ENCODE measurements at regions of chr3 and their contacts with region 1.

Region 1: GRCh38 chr3:58305882-58306711 is at the starts of genes HTD2 and RPP14:
- DNase-seq: peak; percentile 90 to 99
- H3K4me3 ChIP-seq: peak within 1 kb of the TSS; percentile 77 to 86
- H3K27ac ChIP-seq: peak within 1 kb of the TSS; percentile 96 to 97
- H3K4me1 ChIP-seq: peaks cover 7 to 21% of the 10 kb centered on the region in 2 donors
- H3K27me3 ChIP-seq: no peaks in the 10 kb centered on the region
- CTCF ChIP-seq: peak; percentile 92 to 98 (median 94)
- total RNA-seq, gene HTD2: 0.53 TPM
- total RNA-seq, gene RPP14: 32.5 TPM

Region 2: DNA sequence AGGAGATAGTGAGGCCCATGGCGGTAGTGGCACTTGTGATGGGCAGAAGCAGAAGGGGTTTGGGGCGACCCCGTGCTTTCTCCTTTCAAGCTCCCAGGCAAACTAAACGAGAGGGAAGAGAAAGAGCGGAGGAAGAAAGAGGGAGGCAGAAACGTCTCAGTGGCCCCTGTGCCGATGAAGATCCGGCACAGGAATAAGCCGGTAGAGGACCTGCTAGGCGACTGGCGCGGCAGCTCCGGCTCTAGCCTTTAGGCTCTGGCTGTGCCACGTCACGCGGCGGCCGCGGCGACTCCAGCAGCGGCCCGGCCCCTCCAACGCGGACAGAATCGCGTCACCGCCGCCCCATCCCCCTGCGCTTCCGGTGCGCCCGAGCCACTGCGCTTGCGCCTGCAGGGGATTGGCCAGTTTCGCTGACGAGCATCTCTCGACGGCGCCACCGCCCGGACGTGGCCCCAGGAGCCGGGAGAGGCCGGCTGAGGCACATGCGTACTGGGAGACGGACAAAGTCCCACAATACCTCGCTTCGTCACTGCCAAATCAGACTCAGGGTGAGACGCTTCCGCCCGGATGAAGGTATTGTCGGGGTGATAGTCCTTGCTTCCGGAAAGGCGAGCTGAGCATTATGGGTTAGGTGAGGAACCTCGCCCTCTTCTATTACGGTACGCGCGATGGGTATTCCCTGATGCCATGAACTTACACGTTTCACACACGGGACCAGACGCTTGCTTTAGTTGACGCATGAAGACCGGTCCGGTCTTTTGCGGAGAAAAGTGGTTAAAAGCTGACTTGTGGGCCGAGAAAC is 708.8 kb before region 1 on chr3 and contains the start of gene ARF4:
- intact Hi-C with region 1: loop called (anchors 1 kb)
- DNase-seq: peak; percentile 99 to 100
- H3K4me3 ChIP-seq: peak within 1 kb of the TSS; percentile 80 to 95
- H3K27ac ChIP-seq: peak within 1 kb of the TSS; percentile 96 to 99
- H3K4me1 ChIP-seq: peaks cover 0 to 29% of the 10 kb centered on the region in 2 donors
- H3K27me3 ChIP-seq: no peaks in the 10 kb centered on the region
- CTCF ChIP-seq: peak in 1 of 3 experiments; percentile 27
- total RNA-seq, gene ARF4: 50.0 TPM

Region 3: DNA sequence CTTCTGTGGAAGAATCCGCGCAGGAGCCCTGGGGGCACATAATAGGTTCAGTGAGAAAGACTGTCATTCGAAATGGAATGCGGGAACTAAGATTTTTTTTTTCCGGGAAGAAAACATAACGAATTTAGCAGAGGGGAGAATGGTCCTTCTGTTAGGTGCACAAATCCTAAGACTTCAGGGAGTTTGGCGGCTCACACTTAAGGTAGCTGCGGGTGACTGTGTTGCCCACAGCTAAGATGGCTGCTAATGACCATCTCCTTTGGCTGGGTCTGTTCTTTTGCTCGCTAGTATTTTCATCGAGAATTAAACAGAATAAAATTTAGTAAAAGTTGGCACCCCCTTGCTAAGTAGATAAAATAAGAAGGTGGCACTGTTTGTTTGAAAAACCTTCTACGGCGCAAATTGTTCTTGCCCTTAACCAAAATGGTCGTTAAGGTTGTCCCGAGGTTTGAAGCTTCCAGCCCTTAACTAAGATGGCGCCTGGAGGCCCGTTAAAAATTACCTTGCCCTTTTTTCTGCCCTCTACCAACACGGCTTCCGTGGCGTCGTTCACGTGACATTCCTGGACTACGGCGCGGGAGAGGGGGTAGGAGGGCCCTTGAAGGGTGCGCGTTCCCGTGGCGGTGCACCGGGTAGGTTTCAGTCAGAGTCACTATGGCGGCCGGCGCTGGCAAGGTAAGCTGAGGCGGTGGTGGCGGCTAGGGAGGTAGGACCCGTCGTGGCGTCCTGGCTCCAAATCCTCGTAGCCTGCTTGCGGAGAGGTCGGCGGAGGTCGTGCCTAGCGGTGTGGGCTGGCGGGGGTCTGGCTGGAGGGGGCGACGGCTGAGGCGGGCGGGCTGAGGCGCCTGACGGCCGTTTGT is 550.2 kb before region 1 on chr3 and contains the start of gene SLMAP:
- intact Hi-C with region 1: loop called (anchors 1 kb)
- DNase-seq: peak; percentile 92 to 98
- H3K4me3 ChIP-seq: peak within 1 kb of the TSS; percentile 89 to 90
- H3K27ac ChIP-seq: peak within 1 kb of the TSS; percentile 87
- H3K4me1 ChIP-seq: peaks cover 16 to 19% of the 10 kb centered on the region in 2 donors
- H3K27me3 ChIP-seq: no peaks in the 10 kb centered on the region
- CTCF ChIP-seq: no peak
- total RNA-seq, gene SLMAP: 502 TPM

Region 4: DNA sequence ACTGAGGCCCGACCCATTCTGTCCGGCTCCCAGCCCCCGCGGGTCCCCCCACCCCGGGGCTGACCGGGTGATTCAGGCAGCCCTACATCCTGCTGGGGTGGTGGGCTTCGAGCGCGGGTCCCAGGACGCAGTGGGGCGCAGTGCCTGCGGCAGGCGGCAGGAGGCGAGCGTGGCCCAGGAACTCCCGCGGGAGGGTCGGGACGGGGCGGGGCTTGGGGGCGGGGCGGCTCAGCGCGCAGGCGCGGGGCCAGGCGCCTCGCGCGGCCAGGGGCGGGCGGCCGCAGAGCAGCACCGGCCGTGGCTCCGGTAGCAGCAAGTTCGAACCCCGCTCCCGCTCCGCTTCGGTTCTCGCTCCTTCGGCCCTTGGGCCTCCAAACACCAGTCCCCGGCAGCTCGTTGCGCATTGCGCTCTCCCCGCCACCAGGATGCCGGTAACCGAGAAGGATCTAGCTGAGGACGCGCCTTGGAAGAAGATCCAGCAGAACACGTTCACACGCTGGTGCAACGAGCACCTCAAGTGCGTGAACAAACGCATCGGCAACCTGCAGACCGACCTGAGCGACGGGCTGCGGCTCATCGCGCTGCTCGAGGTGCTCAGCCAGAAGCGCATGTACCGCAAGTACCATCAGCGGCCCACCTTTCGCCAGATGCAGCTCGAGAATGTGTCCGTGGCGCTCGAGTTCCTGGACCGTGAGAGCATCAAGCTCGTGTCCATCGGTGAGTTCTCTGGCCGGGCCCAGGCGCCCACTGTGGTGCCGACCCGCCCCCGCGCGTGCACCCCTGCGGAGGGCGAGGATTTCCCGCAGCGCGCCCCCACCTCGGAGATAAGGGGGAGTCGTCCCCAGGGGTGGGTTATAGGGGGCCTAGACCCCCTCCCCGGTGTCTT is 297.7 kb before region 1 on chr3 and contains the start of gene FLNB:
- intact Hi-C with region 1: loop called (anchors 1 kb)
- DNase-seq: peak in 1 of 2 donors; percentile 81
- H3K4me3 ChIP-seq: peak within 1 kb of the TSS; percentile 85 to 100
- H3K27ac ChIP-seq: peak within 1 kb of the TSS; percentile 80 to 87
- H3K4me1 ChIP-seq: peaks cover 8 to 25% of the 10 kb centered on the region in 2 donors
- H3K27me3 ChIP-seq: no peaks in the 10 kb centered on the region
- CTCF ChIP-seq: peak; percentile 77 to 91 (median 87)
- total RNA-seq, gene FLNB: 144 TPM

Region 5: GRCh38 chr3:58332575-58333188 is 26.6 kb after region 1 on chr3 and contains the start of gene PXK:
- intact Hi-C with region 1: loop called (anchors 1 kb)
- DNase-seq: peak in 1 of 2 donors; percentile 89
- H3K4me3 ChIP-seq: peak within 1 kb of the TSS; percentile 88 to 93
- H3K27ac ChIP-seq: peak within 1 kb of the TSS; percentile 61 to 67
- H3K4me1 ChIP-seq: peaks cover 0 to 9% of the 10 kb centered on the region in 2 donors
- H3K27me3 ChIP-seq: no peaks in the 10 kb centered on the region
- CTCF ChIP-seq: peak in 2 of 3 experiments; percentile 9 to 43
- total RNA-seq, gene PXK: 14.8 TPM

Region 6: DNA sequence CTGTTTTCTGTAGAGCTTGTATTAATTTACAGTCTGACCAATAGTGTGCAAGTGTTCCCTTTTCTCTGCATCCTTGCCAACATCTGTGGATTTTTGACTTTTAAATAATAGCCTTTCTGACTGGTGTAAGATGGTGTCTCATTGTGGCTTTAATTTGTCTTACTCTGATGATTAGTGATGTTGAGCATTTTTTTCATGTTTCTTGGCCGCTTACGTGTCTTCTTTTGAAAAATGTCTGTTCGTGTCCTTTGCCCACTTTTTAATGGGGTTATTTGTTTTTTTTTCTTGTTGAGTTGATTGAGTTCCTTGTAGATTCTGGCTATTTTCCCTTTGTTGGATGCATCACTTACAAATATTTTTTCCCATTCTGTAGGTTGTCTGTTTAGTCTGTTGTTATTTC is 238.4 kb after region 1 on chr3:
- intact Hi-C with region 1: no loop called
- DNase-seq: no peak
- H3K4me3 ChIP-seq: no peak overlapping the region
- H3K27ac ChIP-seq: no peak overlapping the region
- H3K4me1 ChIP-seq: no peaks in the 10 kb centered on the region
- H3K27me3 ChIP-seq: no peaks in the 10 kb centered on the region
- CTCF ChIP-seq: no peak